ENCODE measurements at regions of chr19 and their contacts with region 1.

Region 1: DNA sequence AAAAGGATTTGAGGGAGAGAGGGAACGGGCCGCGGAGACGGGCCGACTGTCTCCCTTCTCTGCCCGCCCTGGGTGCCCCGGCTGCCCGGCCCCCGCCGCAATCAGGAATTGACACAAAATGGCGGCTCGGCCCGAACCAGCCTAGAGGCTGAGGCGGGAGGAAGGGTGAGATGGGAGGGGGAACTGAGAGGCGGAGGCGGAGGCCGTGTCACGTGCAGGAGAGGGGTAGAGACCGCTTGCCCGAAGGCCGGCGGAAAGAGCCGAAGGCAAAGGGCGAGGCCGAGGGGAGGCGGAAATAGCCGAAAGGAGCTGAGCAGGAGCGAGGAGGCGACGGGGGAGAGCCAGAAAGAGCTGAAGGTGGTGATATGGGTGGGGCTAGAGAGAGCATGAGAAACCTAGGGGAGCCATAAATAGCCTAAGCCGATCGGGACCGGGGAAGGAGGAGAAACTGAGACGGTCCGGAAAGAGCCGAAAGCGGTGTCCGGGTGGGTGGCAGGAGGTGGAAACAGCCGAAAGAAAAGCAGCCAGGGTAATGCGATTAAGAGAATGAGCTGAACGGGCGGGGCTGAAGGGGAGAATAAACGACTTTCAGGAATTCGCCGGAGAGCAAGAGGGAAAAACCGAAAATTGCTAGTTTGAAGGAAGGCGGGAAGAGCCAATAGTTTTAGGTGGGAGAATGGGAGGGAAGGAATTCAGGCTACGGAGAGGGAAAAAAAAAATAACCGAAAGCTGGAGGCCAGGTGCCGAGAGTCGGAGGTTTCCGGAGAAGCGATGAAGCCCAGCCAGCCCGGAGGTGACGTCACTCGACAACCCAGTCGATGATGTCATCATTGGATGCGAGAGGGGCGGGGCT is at the start of gene ZC3H4:
- DNase-seq: peak; percentile 100
- ATAC-seq: peak; percentile 86
- H3K4me3 Mint-ChIP-seq: peak within 1 kb of the TSS; percentile 95
- H3K27ac Mint-ChIP-seq: peak within 1 kb of the TSS; percentile 100
- H3K4me1 Mint-ChIP-seq: peaks cover 29% of the 10 kb centered on the region
- H3K27me3 Mint-ChIP-seq: no peaks in the 10 kb centered on the region
- total RNA-seq, gene ZC3H4: 102 TPM

Region 2: GRCh38 chr19:46967578-46968027 is 145.6 kb before region 1 on chr19:
- CTCF ChIA-PET with region 1: no interaction called
- POLR2A ChIA-PET with region 1: no interaction called
- DNase-seq: peak; percentile 71
- ATAC-seq: peak; percentile 95
- H3K4me3 Mint-ChIP-seq: peak overlapping the region; percentile 55
- H3K27ac Mint-ChIP-seq: peak overlapping the region; percentile 86
- H3K4me1 Mint-ChIP-seq: peaks cover 47% of the 10 kb centered on the region
- H3K27me3 Mint-ChIP-seq: no peaks in the 10 kb centered on the region

Region 3: GRCh38 chr19:47081111-47081510 is 32.1 kb before region 1 on chr19:
- CTCF ChIA-PET with region 1: interaction called, 24 read pairs
- POLR2A ChIA-PET with region 1: interaction called, 19 read pairs
- DNase-seq: no peak
- ATAC-seq: no peak
- H3K4me3 Mint-ChIP-seq: no peak overlapping the region
- H3K27ac Mint-ChIP-seq: peak overlapping the region; percentile 64
- H3K4me1 Mint-ChIP-seq: peaks cover 6% of the 10 kb centered on the region
- H3K27me3 Mint-ChIP-seq: no peaks in the 10 kb centered on the region

Region 4: GRCh38 chr19:47124937-47125668 is 11.9 kb after region 1 on chr19:
- CTCF ChIA-PET with region 1: interaction called, 23 read pairs
- POLR2A ChIA-PET with region 1: interaction called, 41 read pairs
- DNase-seq: peak; percentile 30
- ATAC-seq: peak; percentile 60
- H3K4me3 Mint-ChIP-seq: no peak overlapping the region
- H3K27ac Mint-ChIP-seq: no peak overlapping the region
- H3K4me1 Mint-ChIP-seq: peaks cover 13% of the 10 kb centered on the region
- H3K27me3 Mint-ChIP-seq: no peaks in the 10 kb centered on the region

Region 5: DNA sequence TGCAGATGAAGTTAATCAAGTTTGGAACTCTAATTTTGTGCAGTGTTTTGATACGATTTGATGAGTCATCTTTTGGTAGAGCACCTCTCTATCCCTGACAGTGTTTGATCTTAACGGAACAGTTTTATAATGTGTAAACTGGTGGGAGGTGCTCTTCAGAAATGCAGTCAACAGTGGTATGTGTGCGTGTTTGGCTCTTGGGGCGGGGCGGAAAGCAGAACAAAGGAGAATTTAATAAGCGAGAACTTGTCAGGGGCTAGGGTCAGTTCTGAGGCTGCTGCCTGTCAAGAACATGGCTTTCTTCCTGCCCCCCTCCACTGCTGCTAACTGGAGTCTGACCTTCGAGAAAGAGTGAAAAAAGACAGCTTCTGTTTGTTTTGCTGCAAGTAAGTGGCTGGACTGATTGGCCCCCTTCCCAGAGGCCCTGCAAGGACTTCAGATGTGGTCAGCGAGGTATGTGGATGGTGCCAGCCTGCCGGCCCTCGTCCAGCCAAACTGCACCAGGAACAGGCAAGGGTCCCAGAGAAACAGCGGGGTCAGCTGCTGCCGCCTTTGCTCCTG is 77.0 kb after region 1 on chr19:
- CTCF ChIA-PET with region 1: interaction called, 7 read pairs
- POLR2A ChIA-PET with region 1: interaction called, 12 read pairs
- DNase-seq: peak; percentile 34
- ATAC-seq: no peak
- H3K4me3 Mint-ChIP-seq: no peak overlapping the region
- H3K27ac Mint-ChIP-seq: peak overlapping the region; percentile 27
- H3K4me1 Mint-ChIP-seq: peaks cover 61% of the 10 kb centered on the region
- H3K27me3 Mint-ChIP-seq: no peaks in the 10 kb centered on the region

Region 6: DNA sequence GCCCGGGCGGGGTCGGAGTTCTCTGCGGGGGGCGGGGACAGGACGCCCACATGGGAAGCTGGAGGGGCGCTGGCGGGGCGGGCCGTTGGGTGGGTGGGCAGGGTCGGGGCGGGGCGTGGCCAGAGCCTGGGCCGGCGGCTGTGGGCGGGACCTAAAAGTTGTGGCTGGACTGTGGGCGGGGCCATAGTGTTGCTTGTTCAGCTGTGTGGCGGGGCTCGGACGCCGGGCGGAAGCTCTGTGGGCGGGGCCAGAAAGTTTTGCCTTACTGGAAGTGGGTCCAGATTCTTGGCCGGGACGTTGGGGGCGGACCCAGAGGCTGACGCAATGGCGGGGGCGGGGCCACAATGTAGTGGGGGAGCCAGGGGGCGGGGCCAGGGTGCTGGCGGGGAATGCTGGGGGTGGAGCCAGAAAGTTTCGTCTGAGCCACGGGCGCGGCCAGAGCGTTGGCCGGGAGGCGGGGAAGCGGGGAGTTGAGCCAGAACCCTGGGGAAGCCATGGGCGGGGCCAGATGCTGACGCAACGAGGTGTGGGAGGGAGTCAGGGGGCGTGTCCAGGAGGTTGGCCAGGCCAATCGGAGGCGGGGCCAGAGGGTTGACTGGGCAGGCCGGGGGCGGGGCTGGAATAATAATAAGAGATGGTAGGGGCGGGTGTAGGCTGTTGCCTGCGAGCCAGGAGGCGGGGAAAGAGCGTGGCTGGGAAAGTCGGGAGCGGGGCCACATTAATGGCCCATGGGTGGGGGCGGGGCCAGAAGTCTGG is 143.6 kb after region 1 on chr19:
- CTCF ChIA-PET with region 1: no interaction called
- POLR2A ChIA-PET with region 1: interaction called, 14 read pairs
- DNase-seq: peak; percentile 100
- ATAC-seq: peak; percentile 88
- H3K4me3 Mint-ChIP-seq: peak overlapping the region; percentile 87
- H3K27ac Mint-ChIP-seq: peak overlapping the region; percentile 97
- H3K4me1 Mint-ChIP-seq: peaks cover 43% of the 10 kb centered on the region
- H3K27me3 Mint-ChIP-seq: no peaks in the 10 kb centered on the region